ENCODE measurements at regions of chr9 and their contacts with region 1.

Region 1: DNA sequence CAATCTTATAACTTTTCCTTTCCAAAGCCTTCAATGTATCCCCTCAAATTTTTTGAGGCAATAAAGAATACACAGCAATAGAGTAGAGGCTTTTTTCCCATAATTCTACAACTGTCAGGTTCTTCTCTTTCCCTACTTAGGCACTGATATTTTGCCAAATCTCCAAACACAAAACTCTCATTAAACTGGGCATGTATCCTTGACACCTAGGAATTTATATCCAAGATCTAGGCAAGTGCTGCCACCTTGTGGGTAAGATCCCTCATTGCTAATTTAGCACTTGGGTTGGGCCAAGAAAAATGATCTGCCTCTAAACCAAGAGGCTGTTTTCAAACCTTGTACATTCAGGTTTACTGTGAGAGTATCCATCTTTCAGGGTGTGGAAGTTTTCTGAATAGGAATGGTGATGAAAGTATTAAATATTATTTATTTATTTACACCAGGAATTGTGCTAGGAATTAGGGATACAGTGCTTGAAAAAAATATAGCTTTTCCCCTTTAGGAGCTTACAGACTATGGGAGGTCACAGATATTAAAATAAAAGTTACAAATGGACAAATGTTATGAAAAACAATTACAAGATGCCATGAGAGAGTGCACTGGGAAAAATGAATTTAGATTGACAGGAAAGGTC is 17.6 kb downstream of the TSTD2 start:
- DNase-seq: peak in 1 of 2 donors; percentile 79
- ATAC-seq: peak; percentile 68 to 83 (median 76)
- H3K4me3 ChIP-seq: no peak overlapping the region
- H3K4me3 Mint-ChIP-seq: no peak overlapping the region
- H3K27ac ChIP-seq: no peak overlapping the region
- H3K27ac Mint-ChIP-seq: no peak overlapping the region
- H3K4me1 ChIP-seq: no peaks in the 10 kb centered on the region
- H3K4me1 Mint-ChIP-seq: no peaks in the 10 kb centered on the region
- H3K27me3 ChIP-seq: no peaks in the 10 kb centered on the region
- H3K27me3 Mint-ChIP-seq: no peaks in the 10 kb centered on the region
- CTCF ChIP-seq: peak; percentile 88

Region 2: DNA sequence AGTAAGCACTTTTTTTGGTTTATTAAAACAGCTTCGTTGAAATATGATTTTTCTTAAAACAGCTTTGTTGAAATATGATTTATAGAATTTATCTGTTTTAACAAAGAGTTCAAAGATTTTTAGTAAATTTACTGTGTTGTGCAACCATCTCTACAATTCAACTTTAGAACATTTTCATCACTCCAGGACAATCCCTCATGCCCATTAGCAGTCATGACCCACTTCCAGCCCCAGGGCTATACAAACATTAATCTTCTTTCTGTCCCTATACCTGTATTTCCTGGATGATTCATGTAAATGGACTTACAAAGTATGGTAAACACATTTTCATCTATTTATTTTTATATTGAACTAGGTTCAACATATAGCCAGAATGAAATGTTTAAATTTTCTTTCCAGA is 436.0 kb before region 1 on chr9:
- intact Hi-C with region 1: no loop called
- DNase-seq: no peak
- ATAC-seq: no peak
- H3K4me3 ChIP-seq: no peak overlapping the region
- H3K4me3 Mint-ChIP-seq: no peak overlapping the region
- H3K27ac ChIP-seq: no peak overlapping the region
- H3K27ac Mint-ChIP-seq: no peak overlapping the region
- H3K4me1 ChIP-seq: no peaks in the 10 kb centered on the region
- H3K4me1 Mint-ChIP-seq: no peaks in the 10 kb centered on the region
- H3K27me3 ChIP-seq: no peaks in the 10 kb centered on the region
- H3K27me3 Mint-ChIP-seq: peaks cover 2 to 42% of the 10 kb centered on the region in 2 donors
- CTCF ChIP-seq: no peak

Region 3: DNA sequence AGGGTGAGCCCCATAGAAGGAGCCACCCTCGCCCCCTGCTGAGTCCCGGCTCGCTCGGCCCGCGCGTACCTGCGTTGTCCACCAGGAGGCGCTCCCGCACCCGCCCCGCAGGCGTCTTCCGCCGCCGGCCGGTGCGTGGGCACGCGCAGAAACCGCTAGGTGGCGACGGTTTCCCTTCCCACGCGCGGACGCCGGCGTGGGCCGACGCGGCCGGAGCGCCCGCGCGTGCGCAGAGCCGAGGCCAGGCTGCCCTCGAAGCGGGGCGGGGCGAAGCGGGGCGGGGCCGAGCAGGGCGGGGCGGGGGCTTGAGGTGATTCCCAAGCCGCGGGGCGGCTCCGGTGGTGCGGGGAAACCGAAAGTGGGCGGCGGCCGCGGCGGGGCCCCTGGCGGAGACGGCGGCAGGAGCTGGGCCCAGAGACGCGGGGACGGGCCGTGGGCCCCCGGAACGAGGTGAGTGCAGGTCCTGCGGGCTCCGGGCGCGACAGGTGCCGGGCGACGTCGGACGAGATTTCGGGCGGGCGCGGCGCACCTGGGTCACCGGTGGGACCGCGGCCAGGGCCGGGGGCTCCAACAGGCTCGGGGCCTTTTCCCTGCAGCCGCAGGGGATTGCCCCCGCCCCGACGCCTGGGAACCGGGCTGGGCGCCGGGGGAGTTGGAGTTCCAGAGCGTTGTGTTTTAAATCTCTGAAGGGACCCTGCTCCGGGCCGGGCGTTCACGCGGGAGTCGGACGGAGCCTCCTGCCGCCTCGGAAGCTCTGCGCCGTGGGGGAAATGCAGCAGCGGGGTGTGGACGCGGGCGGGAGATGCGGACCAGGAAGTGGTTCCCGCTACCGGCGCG is 203.5 kb before region 1 on chr9 and contains the start of gene TDRD7:
- intact Hi-C with region 1: loop called (anchors 2 kb)
- DNase-seq: peak; percentile 92 to 98
- ATAC-seq: peak; percentile 90 to 97 (median 92)
- H3K4me3 ChIP-seq: peak within 1 kb of the TSS; percentile 88
- H3K4me3 Mint-ChIP-seq: peak within 1 kb of the TSS; percentile 92
- H3K27ac ChIP-seq: peak within 1 kb of the TSS; percentile 87
- H3K27ac Mint-ChIP-seq: peak within 1 kb of the TSS; percentile 84 to 88
- H3K4me1 ChIP-seq: peaks cover 12% of the 10 kb centered on the region
- H3K4me1 Mint-ChIP-seq: peaks cover 38 to 39% of the 10 kb centered on the region in 2 donors
- H3K27me3 ChIP-seq: peaks cover 2% of the 10 kb centered on the region
- H3K27me3 Mint-ChIP-seq: peaks cover 14 to 20% of the 10 kb centered on the region in 2 donors
- CTCF ChIP-seq: peak; percentile 100
- total RNA-seq, gene TDRD7: 9.8 to 16.4 (median 16.3) TPM

Region 4: DNA sequence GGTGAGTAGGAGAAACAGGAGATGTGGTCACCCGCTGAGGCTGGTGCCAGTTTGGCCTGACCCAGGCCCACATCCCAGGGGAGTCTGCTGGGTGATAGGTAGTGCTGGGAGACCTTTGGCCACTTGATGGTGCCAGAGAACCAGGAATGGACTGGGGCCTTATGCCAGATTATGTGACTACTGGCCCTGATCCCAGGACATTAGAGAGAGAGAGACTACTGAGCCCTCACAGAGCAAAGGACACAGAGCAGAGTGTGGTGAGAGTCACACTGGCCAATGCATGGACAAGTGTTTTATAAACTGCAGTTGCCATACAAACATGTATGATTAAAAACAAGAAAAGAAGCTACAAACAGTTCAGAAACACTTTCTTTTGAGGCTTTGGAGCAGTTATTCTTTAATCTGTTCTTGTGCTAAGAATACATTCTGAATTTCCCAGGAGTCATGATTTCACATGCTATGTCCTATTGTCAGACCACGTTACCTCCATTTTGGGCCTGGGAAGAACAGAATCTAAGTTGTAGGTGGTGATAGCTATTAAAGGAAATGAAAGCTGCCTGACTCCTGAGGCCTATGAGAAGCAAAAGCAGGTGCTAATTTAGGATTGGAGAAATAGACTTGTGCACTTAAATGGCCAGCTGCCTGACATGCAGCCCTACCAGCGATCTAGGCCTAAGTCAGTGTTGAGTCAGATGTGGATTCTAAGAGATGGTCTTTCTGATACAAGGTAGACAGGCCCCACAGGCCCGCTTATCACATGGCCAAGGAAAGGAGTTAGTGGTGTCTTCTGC is 146.7 kb before region 1 on chr9:
- intact Hi-C with region 1: loop called (anchors 2 kb)
- DNase-seq: peak in 1 of 2 donors; percentile 58
- ATAC-seq: peak in 1 of 3 donors; percentile 41
- H3K4me3 ChIP-seq: no peak overlapping the region
- H3K4me3 Mint-ChIP-seq: no peak overlapping the region
- H3K27ac ChIP-seq: no peak overlapping the region
- H3K27ac Mint-ChIP-seq: peak overlapping the region in 1 of 2 donors; percentile 14
- H3K4me1 ChIP-seq: no peaks in the 10 kb centered on the region
- H3K4me1 Mint-ChIP-seq: peaks cover 0 to 3% of the 10 kb centered on the region in 2 donors
- H3K27me3 ChIP-seq: no peaks in the 10 kb centered on the region
- H3K27me3 Mint-ChIP-seq: no peaks in the 10 kb centered on the region
- CTCF ChIP-seq: no peak